ENCODE measurements at regions of chr1 and their contacts with region 1.

Region 1: DNA sequence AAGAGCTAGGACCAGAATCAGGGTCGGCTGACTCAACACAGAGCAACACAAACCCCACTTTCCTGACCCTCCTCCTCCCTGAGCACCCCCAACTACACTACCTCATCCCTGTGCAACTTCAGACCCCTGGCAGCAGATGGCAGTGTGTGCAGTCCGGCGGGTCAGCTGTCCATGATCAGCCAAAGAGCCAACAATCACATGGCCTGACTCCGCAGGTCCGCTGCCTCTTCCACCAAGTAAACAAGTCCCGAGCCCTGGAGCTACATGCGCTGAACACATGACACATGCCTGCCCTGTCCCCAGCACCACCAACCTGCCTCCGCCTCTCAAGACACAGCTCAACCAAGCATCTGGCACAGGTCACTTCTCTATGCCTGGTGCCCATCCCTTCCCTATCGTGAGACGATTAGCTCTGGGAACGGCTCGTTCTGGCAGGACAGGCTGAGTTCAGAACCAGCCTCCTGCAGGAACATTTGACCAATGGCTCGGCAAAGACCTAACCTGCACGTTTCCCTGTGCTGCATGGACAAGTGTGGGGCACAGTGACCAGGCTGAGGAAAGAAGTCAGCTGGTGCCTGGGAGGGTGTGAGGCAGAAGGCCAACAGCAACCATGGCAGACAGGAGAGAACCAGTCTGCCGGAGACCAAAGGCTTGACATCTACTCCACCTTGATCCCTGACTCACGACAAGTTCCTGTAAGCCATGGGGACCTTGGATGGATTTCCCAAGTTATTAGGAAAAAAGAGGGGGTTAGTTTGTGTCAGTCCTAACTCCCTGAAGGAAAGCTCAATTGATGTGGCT is 60.3 kb downstream of the CD46 start:
- DNase-seq: peak in 1 of 9 donors; percentile 20
- ATAC-seq: peak; percentile 34
- H3K4me3 ChIP-seq: no peak overlapping the region
- H3K4me3 Mint-ChIP-seq: peak overlapping the region in 1 of 10 donors; percentile 49
- H3K27ac ChIP-seq: no peak overlapping the region
- H3K27ac Mint-ChIP-seq: peak overlapping the region in 7 of 9 donors; percentile 29 to 91 (median 72)
- H3K4me1 ChIP-seq: peaks cover 13 to 28% of the 10 kb centered on the region in 2 donors
- H3K4me1 Mint-ChIP-seq: peaks cover 56 to 94% (median 91%) of the 10 kb centered on the region in 7 donors
- H3K27me3 ChIP-seq: no peaks in the 10 kb centered on the region
- H3K27me3 Mint-ChIP-seq: no peaks in the 10 kb centered on the region

Region 2: DNA sequence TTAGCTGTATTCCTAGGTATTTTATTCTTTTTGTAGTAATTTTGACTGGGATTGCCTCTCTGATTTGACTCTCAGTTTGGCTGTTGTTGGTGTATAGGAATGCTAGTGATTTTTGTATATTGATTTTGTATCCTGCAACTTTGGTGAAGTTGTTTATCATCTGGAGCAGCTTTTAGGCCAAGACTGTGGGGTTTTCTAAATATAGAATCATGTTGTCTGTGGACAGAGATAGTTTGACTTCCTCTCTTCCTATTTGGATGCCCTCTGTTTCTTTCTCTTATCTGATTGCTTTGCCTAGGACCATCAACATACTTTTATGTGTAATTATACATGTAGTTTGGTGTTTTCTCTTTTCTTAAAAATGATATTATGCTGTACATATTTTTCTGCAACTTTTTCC is 33.1 kb before region 1 on chr1:
- CTCF ChIA-PET with region 1: no interaction called
- POLR2A ChIA-PET with region 1: no interaction called
- intact Hi-C with region 1: no loop called
- DNase-seq: no peak
- ATAC-seq: no peak
- H3K4me3 ChIP-seq: no peak overlapping the region
- H3K4me3 Mint-ChIP-seq: no peak overlapping the region
- H3K27ac ChIP-seq: no peak overlapping the region
- H3K27ac Mint-ChIP-seq: peak overlapping the region in 3 of 9 donors; percentile 14 to 62 (median 16)
- H3K4me1 ChIP-seq: no peaks in the 10 kb centered on the region
- H3K4me1 Mint-ChIP-seq: peaks cover 16 to 47% (median 35%) of the 10 kb centered on the region in 7 donors
- H3K27me3 ChIP-seq: no peaks in the 10 kb centered on the region
- H3K27me3 Mint-ChIP-seq: no peaks in the 10 kb centered on the region

Region 3: GRCh38 chr1:207822602-207823451 is 10.7 kb after region 1 on chr1:
- CTCF ChIA-PET with region 1: interaction called, 6 read pairs
- POLR2A ChIA-PET with region 1: interaction called, 23 read pairs
- intact Hi-C with region 1: loop called in 1 of 2 experiments (anchors 1 kb)
- DNase-seq: peak; percentile 35 to 89 (median 86)
- ATAC-seq: peak; percentile 65
- H3K4me3 ChIP-seq: peak overlapping the region; percentile 87
- H3K4me3 Mint-ChIP-seq: peak overlapping the region; percentile 88 to 96 (median 95)
- H3K27ac ChIP-seq: peak overlapping the region; percentile 88
- H3K27ac Mint-ChIP-seq: peak overlapping the region; percentile 96 to 100 (median 98)
- H3K4me1 ChIP-seq: peaks cover 29 to 61% of the 10 kb centered on the region in 2 donors
- H3K4me1 Mint-ChIP-seq: peaks cover 72 to 96% (median 89%) of the 10 kb centered on the region in 7 donors
- H3K27me3 ChIP-seq: no peaks in the 10 kb centered on the region
- H3K27me3 Mint-ChIP-seq: peaks cover 0 to 6% (median 0%) of the 10 kb centered on the region in 5 donors

Region 4: GRCh38 chr1:208724079-208724478 is 912.0 kb after region 1 on chr1:
- CTCF ChIA-PET with region 1: no interaction called
- POLR2A ChIA-PET with region 1: no interaction called
- intact Hi-C with region 1: no loop called
- DNase-seq: no peak
- ATAC-seq: no peak
- H3K4me3 ChIP-seq: no peak overlapping the region
- H3K4me3 Mint-ChIP-seq: no peak overlapping the region
- H3K27ac ChIP-seq: no peak overlapping the region
- H3K27ac Mint-ChIP-seq: no peak overlapping the region
- H3K4me1 ChIP-seq: no peaks in the 10 kb centered on the region
- H3K4me1 Mint-ChIP-seq: no peaks in the 10 kb centered on the region
- H3K27me3 ChIP-seq: no peaks in the 10 kb centered on the region
- H3K27me3 Mint-ChIP-seq: peaks cover 0 to 4% (median 1%) of the 10 kb centered on the region in 5 donors